ENCODE measurements at regions of chr10 and their contacts with region 1.

Region 1: DNA sequence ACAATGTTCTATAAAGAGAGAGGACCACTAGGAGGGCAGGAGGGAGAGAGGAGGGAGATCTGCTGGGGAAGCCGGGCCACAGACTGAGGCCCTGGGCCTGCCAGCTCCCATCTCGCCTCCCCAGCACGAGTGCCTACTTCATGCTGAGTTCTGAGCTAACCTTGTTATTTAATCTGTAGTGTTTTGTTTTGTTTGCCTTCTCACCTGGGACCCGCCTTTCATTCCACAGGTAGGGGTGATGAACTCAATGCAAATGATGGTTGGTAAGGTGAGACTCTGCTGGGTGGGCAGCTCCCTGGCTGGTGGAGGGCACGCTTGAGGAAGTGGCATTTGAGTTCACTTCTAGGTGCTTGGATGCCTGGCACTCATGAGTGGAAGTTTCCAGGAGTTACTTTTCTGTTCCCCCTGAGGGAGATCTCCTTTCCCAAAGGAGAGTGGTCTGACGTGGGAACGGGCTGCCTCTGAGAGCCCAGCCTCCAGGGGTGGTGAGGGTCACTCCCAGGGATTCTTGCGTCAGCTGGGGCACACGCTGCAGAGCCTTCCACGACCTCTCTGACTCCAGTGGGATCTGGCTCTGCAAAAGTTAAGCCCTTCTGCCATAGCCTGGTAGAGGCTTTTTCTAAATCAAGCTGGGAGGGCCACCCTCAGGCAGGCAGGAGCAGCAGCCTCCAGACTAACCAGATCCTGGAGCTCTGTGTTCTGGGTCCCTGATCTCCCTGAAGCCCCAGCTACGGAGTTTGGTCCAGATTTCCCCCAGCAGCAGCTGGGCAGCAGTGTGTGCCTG is 22.4 kb downstream of the UBTD1 start:
- DNase-seq: no peak
- ATAC-seq: peak in 2 of 4 donors; percentile 9 to 40
- H3K4me3 ChIP-seq: no peak overlapping the region
- H3K27ac ChIP-seq: peak overlapping the region in 4 of 12 donors; percentile 22 to 49 (median 37)
- H3K4me1 ChIP-seq: peaks cover 6 to 87% (median 47%) of the 10 kb centered on the region in 12 donors
- H3K27me3 ChIP-seq: no peaks in the 10 kb centered on the region
- CTCF ChIP-seq: peak in 4 of 12 donors; percentile 8 to 34 (median 27)
- POLR2A ChIP-seq: no peak

Region 2: DNA sequence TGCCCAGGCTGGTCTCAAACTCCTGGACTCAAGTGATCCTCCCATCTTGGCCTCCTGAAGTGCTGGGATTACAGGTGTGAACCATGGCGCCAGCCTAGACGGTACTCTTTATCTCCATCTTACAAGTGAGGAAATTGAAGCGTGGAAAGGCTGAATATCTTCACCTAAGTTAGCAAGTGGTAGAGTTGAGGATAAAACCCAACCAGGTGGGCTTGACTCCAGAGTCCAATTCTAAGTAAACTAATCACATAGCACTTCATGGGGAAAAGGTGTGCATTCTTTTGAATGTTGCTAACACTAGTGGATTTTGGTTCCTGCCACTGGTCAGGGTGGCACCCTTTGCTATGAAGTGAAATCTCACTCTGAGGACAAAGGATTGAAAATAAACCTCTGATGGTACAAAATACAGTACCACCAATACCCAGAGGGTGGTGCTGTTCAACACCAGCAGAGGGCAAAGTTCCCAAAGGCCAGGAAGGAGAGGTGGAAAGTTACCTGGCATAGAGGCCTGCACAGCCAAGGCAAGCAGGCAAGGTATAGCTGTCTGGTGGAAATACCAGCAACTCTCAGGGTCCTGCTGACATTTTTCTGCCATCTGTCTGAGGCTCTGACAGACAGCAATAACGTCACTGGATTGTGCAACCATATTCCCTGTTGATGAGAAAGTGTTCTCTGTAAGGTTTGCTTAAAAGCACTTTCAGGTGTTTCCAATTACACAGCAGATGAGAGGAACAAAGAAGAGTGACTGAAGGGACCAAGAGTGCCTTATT is 57.6 kb before region 1 on chr10:
- intact Hi-C with region 1: loop called in 1 of 10 experiments (anchors 5 kb)
- DNase-seq: peak in 2 of 5 donors; percentile 28 to 35
- ATAC-seq: peak in 3 of 4 donors; percentile 54 to 68 (median 64)
- H3K4me3 ChIP-seq: no peak overlapping the region
- H3K27ac ChIP-seq: peak overlapping the region in 7 of 12 donors; percentile 18 to 40 (median 32)
- H3K4me1 ChIP-seq: peaks cover 0 to 18% (median 0%) of the 10 kb centered on the region in 12 donors
- H3K27me3 ChIP-seq: no peaks in the 10 kb centered on the region
- CTCF ChIP-seq: peak; percentile 70 to 92 (median 78)
- POLR2A ChIP-seq: no peak

Region 3: GRCh38 chr10:97543025-97543575 is 21.9 kb after region 1 on chr10:
- intact Hi-C with region 1: loop called in 1 of 10 experiments (anchors 1 kb)
- DNase-seq: peak; percentile 83 to 94 (median 88)
- ATAC-seq: peak; percentile 78 to 92 (median 88)
- H3K4me3 ChIP-seq: no peak overlapping the region
- H3K27ac ChIP-seq: peak overlapping the region; percentile 77 to 97 (median 88)
- H3K4me1 ChIP-seq: peaks cover 0 to 75% (median 57%) of the 10 kb centered on the region in 12 donors
- H3K27me3 ChIP-seq: no peaks in the 10 kb centered on the region
- CTCF ChIP-seq: no peak
- POLR2A ChIP-seq: peak in 1 of 2 donors; percentile 31

Region 4: DNA sequence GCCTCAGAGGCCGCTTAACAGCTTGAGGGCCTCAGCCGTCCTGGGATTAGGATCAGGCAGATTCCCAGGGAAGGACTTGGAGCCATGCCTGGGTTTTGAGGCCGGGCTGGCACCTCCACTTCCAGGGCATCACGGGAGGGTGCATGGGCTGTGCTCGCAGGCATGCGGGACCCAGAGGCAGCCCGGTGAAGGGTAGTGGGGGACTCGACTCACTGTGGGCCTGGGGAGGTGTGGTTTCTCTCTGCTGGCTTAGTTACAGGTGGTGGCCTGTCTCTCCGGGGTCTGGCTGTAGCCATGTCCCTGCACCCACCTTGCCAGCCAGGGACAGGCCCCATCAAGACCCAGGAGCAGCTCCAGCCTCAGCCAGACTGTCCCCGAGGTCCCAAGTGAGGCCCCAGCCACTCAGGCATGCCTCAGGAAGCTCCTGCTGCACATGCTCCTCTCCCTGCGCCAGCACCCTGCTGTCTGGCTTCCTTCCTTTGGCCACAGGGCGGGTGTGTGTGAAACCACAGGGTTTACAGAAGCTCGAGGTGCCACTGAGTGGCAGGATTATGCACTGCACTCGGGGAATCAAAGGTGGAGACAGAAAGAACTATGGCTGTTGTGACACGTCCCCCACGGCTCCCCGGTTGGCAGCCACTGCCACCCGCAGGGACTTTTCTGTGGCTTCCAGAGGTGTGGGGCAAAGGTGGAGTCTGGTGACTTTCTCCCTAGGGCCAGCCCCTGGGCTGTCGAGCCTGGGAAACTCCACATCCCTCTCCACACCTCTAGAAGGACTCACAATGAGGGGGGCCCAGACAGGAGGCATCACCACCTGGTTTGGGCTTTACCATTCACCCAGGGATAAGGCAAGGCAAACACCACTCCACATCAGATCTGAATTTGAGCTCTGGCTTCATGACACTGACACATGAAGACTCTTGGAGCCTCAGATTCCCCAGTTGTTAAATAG is 348.2 kb after region 1 on chr10:
- intact Hi-C with region 1: no loop called
- DNase-seq: peak; percentile 79 to 89 (median 81)
- ATAC-seq: peak; percentile 92 to 98 (median 96)
- H3K4me3 ChIP-seq: no peak overlapping the region
- H3K27ac ChIP-seq: no peak overlapping the region
- H3K4me1 ChIP-seq: peaks cover 0 to 15% (median 6%) of the 10 kb centered on the region in 12 donors
- H3K27me3 ChIP-seq: peaks cover 0 to 13% (median 0%) of the 10 kb centered on the region in 9 donors
- CTCF ChIP-seq: peak; percentile 57 to 78 (median 69)
- POLR2A ChIP-seq: no peak